K562 (cell line): ENCODE measurements at regions of chr16 and their contacts with region 1.

Region 1: DNA sequence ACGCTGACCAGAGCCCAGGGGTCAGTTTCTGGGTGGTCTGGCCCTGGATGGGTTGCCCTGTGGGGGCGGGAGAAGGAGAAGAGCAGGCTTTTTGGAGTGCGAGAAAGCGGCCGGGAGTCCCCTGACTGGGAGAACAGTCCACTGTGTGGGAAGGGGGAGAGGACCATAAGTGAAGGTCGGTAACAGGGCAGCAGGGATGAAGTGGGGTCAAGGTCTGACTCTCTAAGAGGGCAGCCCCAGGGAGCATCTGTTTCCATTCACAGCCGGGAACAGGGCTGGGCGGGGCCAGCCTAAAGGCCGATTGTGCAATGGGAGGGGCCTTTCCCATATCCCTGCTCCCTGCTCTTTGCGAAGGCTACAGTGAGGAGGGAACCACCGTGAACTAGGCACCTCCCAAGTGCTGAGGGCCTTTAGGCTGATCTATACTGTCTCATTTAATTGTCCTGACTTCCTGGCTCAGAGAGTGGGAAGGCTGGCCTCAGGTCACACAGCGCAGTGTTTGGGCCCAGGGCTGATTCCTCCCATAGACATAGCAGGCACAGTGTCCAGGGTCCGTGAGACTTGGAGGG is 10.4 kb upstream of the WFDC1 start:
- DNase-seq: peak; percentile 12 to 38 (median 28)
- ATAC-seq: peak; percentile 65
- H3K4me3 ChIP-seq: no peak overlapping the region
- H3K27ac ChIP-seq: no peak overlapping the region
- H3K4me1 ChIP-seq: no peaks in the 10 kb centered on the region
- H3K27me3 ChIP-seq: peaks cover 79 to 94% of the 10 kb centered on the region in 2 experiments
- CTCF ChIP-seq: no peak
- EP300 ChIP-seq: no peak
- POLR2A ChIP-seq: no peak
- RAD21 ChIP-seq: no peak

Region 2: DNA sequence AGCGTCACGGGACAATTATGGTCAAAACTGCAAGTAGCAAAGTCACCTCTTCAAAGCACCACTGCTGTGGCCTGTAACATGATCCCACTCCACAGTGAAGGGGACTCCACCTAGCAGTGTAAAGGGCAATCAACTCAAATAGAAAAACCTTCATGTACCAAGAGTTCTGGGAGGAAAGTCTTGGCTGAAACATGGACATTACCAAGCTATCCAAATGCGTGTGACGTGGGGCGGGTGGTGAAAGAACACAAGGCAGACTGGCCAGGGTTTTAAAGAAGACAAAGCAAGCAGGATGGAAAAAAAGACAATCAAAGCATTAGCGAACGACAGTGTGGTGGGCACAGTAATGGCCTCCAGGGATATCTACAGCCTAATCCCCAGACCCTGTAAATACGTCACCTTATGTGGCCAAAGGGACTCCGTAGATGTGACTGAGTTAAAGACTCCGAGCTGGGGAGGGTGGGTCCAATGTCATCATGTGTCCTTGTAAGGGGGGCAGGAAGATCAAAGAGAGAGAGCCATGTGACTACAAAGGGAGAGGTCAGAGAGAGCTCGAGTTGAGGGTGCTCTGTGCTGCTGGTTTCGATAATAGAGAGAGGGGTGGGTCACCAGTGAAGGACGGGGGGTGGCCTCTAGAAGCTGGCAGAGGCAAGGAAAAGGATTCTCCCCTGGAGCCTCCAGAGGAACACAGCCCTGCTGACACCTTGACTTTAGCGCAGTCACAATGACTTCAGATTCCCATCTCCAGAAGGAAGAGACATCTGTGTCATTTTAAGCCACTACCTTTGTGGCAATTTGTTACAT is 145.2 kb before region 1 on chr16:
- CTCF ChIA-PET with region 1: no interaction called
- POLR2A ChIA-PET with region 1: no interaction called
- in situ Hi-C with region 1: no loop called
- intact Hi-C with region 1: no loop called
- DNase-seq: peak; percentile 63 to 92 (median 76)
- ATAC-seq: peak; percentile 87
- H3K4me3 ChIP-seq: peak overlapping the region; percentile 15; the same call in 1 of the 2 replicates
- H3K27ac ChIP-seq: peak overlapping the region; percentile 97
- H3K4me1 ChIP-seq: peaks cover 28 to 32% of the 10 kb centered on the region in 2 experiments
- H3K27me3 ChIP-seq: no peaks in the 10 kb centered on the region
- CTCF ChIP-seq: peak in 1 of 3 experiments; percentile 19; a peak in 1 of 6 replicates
- EP300 ChIP-seq: peak; percentile 88
- POLR2A ChIP-seq: peak; percentile 71
- RAD21 ChIP-seq: no peak; a peak in 1 of 4 replicates

Region 3: DNA sequence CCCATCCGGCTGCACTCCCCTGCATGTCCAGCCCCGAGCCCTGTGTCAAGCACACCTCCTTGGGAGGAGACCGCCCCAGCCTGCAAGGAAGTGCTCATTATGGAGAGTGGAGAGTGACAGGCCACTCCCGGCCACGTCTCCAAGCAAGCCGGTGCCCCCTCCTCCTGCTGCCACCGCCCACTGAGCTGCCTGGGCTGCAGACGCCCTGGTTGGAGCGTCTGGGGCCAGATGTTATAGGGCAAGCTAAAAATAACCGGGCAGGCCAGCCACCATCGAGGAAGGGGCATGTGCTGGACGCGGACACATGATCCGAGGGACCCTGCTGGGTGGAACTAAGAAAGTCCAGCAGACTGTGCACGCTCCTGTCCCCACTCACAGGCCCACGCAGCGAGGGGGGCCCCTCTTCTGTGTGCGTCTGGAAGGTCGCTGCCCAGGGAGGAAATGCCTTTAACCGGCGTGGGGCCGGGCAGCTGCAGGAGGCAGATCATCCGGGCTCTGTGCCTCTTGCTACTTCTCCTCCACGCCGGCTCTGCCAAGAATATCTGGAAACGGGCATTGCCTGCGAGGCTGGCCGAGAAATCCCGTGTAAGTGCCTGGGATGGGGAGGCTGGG is 10.4 kb after region 1 on chr16 and contains the start of gene WFDC1:
- CTCF ChIA-PET with region 1: no interaction called
- POLR2A ChIA-PET with region 1: no interaction called
- in situ Hi-C with region 1: no loop called
- intact Hi-C with region 1: no loop called
- DNase-seq: no peak
- ATAC-seq: peak; percentile 44
- H3K4me3 ChIP-seq: no peak within 1 kb of the TSS
- H3K27ac ChIP-seq: no peak within 1 kb of the TSS
- H3K4me1 ChIP-seq: peaks cover 0 to 5% of the 10 kb centered on the region in 2 experiments; a peak in 1 of 5 replicates
- H3K27me3 ChIP-seq: peaks cover 78 to 92% of the 10 kb centered on the region in 2 experiments
- CTCF ChIP-seq: no peak
- EP300 ChIP-seq: no peak
- POLR2A ChIP-seq: no peak
- RAD21 ChIP-seq: no peak
- polyA plus RNA-seq, gene WFDC1: not detected

Region 4: DNA sequence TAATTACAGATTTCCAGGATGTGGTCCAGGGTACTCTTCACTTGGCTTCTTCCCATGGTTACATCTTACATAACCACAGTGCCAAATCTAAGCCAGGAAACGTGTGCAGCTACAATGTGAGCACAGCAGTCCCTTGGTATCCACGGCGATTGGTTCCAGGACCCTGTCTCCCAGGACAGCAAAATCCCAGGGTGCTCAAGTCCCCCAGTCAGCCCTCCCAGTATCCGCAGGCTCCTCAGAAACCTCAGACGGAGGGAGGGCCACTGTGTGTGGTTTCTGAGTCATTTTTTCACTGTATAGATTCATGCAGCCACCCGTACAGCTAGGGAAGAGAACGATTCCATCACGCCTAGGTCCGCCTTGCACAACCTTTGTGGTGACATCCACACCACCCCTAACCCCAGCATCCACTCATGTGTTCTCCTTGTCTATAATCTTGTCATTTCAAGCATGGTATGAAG is 73.0 kb after region 1 on chr16:
- CTCF ChIA-PET with region 1: no interaction called
- POLR2A ChIA-PET with region 1: no interaction called
- in situ Hi-C with region 1: no loop called
- intact Hi-C with region 1: no loop called
- DNase-seq: no peak
- ATAC-seq: no peak; the same call in 2 of the 3 replicates
- H3K4me3 ChIP-seq: no peak overlapping the region
- H3K27ac ChIP-seq: no peak overlapping the region
- H3K4me1 ChIP-seq: no peaks in the 10 kb centered on the region
- H3K27me3 ChIP-seq: peaks cover 43 to 71% of the 10 kb centered on the region in 2 experiments
- CTCF ChIP-seq: no peak
- EP300 ChIP-seq: no peak
- POLR2A ChIP-seq: no peak
- RAD21 ChIP-seq: no peak

Region 5: DNA sequence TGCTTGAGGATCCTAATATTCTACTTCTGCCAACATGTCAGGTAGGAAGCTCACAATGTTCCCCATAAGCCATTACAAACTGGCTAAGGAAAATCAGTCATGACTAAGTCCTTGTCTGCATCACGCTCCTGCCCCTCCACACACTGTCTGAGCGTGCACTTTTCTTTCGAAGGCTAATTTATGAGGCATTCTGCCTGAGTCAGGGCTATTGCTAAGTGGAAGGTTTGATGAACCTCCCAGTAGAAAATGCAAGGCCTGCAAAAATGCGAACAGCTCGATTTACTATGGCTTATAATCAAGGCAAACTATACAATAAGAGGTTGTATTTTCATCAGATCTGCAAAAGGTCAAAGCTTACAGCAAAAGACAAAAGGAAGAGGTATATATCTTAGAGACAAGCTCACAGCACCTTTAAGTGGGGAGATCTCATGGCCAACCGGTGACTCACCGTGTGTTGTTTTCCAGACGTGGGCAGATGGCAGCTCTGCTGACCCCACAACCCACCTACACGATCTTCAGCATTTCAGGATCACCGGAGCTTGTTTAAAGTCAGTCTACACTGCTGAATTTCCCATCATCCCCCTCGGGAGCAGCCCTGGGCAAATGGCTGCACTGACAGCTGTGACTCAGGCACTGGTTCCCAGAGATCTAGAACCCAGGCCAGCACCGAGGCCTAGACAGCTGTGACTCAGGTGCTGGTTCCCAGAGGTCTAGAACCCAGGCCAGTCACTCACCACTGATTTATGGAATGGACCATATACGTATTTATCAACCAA is 194.1 kb after region 1 on chr16:
- CTCF ChIA-PET with region 1: no interaction called
- POLR2A ChIA-PET with region 1: no interaction called
- in situ Hi-C with region 1: loop called (anchors 5 kb)
- intact Hi-C with region 1: no loop called
- DNase-seq: peak in 1 of 4 experiments; percentile 18
- ATAC-seq: peak; percentile 51
- H3K4me3 ChIP-seq: no peak overlapping the region
- H3K27ac ChIP-seq: no peak overlapping the region
- H3K4me1 ChIP-seq: peaks cover 0 to 13% of the 10 kb centered on the region in 2 experiments; a peak in 2 of 5 replicates
- H3K27me3 ChIP-seq: peaks cover 0 to 7% of the 10 kb centered on the region in 2 experiments; a peak in 3 of 5 replicates
- CTCF ChIP-seq: no peak
- EP300 ChIP-seq: no peak
- POLR2A ChIP-seq: no peak
- RAD21 ChIP-seq: no peak